Naive thymus-derived CD4-positive, alpha-beta T cell (primary cell): ENCODE measurements at regions of chr21 and their contacts with region 1.

Region 1: GRCh38 chr21:29298348-29299045 is at the start of gene BACH1:
- DNase-seq: peak; percentile 59 to 91 (median 76)
- ATAC-seq: peak; percentile 80
- H3K4me3 ChIP-seq: peak within 1 kb of the TSS; percentile 71
- H3K4me3 Mint-ChIP-seq: peak within 1 kb of the TSS; percentile 84 to 94 (median 90)
- H3K27ac ChIP-seq: peak within 1 kb of the TSS; percentile 86
- H3K27ac Mint-ChIP-seq: peak within 1 kb of the TSS; percentile 71 to 91 (median 78)
- H3K4me1 ChIP-seq: peaks cover 4 to 47% of the 10 kb centered on the region in 2 donors
- H3K4me1 Mint-ChIP-seq: peaks cover 42 to 85% (median 74%) of the 10 kb centered on the region in 7 donors
- H3K27me3 ChIP-seq: no peaks in the 10 kb centered on the region
- H3K27me3 Mint-ChIP-seq: peaks cover 0 to 3% (median 0%) of the 10 kb centered on the region in 5 donors
- total RNA-seq, gene BACH1: 26.0 to 95.6 (median 45.5) TPM

Region 2: DNA sequence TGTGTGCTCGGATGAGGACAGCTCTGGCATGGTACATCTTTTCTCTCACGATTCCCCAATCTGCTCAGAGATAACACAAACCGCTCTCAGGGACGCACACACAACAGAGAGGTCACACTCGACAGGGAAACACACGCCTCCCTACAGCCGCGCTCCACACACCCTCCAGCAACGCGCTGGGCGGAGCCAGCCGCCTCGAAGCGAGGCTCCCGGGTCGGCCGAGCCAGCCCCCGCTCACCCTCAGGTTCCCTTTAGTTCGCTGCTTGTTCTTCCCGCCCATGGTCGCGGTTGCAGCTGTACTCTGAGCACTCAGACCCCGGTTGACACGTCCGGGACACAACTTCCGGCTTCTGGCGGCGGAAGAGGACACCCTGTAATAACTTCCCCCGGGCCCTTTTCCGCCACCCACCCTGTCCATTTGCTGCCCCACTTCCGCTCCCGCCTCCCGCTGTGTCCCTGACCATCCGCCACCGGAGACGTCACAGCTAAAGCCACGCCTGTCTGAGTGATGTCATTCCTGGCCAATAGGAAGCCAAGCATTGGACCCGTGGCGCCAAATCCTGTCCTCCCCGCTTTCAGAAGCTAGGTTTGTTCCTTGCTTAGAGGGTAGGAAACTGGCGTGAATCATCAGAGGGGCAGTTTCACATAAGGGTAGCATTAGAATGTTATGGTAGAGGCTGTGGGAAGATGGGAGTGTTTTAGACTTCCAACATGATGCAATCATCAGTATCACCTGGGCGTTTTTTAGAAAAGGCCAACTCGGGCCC is 305.8 kb before region 1 on chr21 and contains the start of gene LTN1:
- CTCF ChIA-PET with region 1: no interaction called
- POLR2A ChIA-PET with region 1: no interaction called
- intact Hi-C with region 1: loop called (anchors 2 to 10 kb)
- DNase-seq: peak; percentile 91 to 99 (median 98)
- ATAC-seq: peak; percentile 98
- H3K4me3 ChIP-seq: peak within 1 kb of the TSS; percentile 86
- H3K4me3 Mint-ChIP-seq: peak within 1 kb of the TSS; percentile 89 to 99 (median 94)
- H3K27ac ChIP-seq: peak within 1 kb of the TSS; percentile 87
- H3K27ac Mint-ChIP-seq: peak within 1 kb of the TSS; percentile 94 to 99 (median 98)
- H3K4me1 ChIP-seq: peaks cover 11 to 23% of the 10 kb centered on the region in 2 donors
- H3K4me1 Mint-ChIP-seq: peaks cover 26 to 58% (median 42%) of the 10 kb centered on the region in 7 donors
- H3K27me3 ChIP-seq: no peaks in the 10 kb centered on the region
- H3K27me3 Mint-ChIP-seq: no peaks in the 10 kb centered on the region
- total RNA-seq, gene LTN1: 27.3 to 36.3 (median 31.3) TPM

Region 3: DNA sequence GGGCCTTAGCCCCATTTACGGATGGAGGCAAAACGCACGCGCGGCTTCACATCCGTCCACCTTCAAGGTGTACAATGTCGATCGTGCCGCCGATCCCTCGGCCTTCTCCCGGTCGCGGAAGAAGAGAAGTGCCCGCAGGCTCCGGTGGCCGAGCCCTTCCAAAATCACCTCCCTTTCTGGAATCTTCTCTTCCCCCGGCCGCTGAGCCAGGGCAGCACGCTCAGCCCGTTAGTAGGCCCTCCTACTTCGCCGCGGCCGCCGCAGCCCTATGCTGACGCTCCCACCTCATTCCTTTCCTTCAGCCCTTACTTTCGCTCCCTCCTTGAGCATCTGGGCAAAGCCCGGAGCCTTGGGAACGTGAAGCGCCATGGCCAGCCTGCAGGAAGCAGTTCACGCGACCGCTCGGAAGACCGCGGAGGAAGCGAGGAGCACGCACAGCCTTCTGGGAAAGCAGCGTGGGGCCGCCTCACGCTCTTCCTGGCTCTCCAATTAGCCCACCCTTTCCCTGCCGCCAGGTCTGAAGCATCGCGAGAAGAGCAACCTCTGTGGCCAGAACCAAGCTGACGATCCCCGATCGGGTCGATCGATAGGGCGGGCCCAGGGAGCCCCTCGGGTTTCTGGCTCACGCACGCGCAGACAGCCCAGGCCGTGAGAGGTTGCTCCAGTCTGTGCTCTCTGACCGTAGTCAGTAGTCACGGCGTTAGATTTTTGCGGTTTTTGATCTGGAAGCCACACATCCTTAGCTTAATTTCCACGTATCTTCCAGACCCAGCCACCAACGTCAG is 225.1 kb before region 1 on chr21 and contains the start of gene CCT8:
- CTCF ChIA-PET with region 1: no interaction called
- POLR2A ChIA-PET with region 1: interaction called, 54 read pairs
- intact Hi-C with region 1: loop called (anchors 1 kb)
- DNase-seq: peak; percentile 93 to 100 (median 98)
- ATAC-seq: peak; percentile 96
- H3K4me3 ChIP-seq: peak within 1 kb of the TSS; percentile 80
- H3K4me3 Mint-ChIP-seq: peak within 1 kb of the TSS; percentile 98 to 100 (median 99)
- H3K27ac ChIP-seq: peak within 1 kb of the TSS; percentile 88
- H3K27ac Mint-ChIP-seq: peak within 1 kb of the TSS; percentile 97 to 100 (median 99)
- H3K4me1 ChIP-seq: peaks cover 24 to 25% of the 10 kb centered on the region in 2 donors
- H3K4me1 Mint-ChIP-seq: peaks cover 19 to 78% (median 67%) of the 10 kb centered on the region in 7 donors
- H3K27me3 ChIP-seq: no peaks in the 10 kb centered on the region
- H3K27me3 Mint-ChIP-seq: no peaks in the 10 kb centered on the region
- total RNA-seq, gene CCT8: 87.6 to 223 (median 126) TPM

Region 4: DNA sequence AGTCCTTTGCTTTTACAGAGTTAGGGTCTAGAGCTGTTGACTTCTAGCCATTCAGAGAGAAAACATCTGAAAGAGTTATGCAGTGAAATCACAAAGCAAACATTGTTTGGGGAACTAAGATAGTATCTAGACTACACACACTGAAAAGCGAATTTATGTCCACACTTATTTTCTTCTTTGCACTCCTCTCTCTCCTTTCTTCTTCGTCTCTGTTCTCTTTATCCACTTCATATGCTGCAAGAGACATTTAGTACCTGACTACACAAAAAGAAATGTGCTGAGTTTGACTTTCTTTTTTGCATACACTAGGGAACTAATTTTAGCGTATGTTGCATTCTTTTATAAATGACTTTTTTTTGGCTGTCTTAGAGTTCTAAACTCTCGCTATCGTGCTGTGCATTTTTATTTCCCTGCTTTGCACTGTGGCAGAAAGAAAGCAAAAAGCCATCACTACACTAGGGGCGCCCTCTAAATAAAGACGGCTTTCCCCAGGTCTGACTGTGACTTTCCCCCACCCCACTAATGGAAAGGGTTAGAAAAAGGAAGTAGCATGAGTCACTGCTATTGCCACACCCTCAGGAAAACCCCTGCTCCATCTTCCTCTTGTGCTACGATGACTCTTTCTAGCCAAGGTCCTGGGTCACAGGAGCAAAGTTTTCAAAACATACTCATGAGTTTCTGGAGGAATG is 102.4 kb before region 1 on chr21:
- CTCF ChIA-PET with region 1: interaction called, 3 read pairs
- POLR2A ChIA-PET with region 1: no interaction called
- intact Hi-C with region 1: loop called (anchors 1 kb)
- DNase-seq: peak in 8 of 9 donors; percentile 13 to 71 (median 44)
- ATAC-seq: peak; percentile 99
- H3K4me3 ChIP-seq: peak overlapping the region; percentile 30
- H3K4me3 Mint-ChIP-seq: peak overlapping the region; percentile 63 to 92 (median 82)
- H3K27ac ChIP-seq: no peak overlapping the region
- H3K27ac Mint-ChIP-seq: peak overlapping the region; percentile 2 to 88 (median 84)
- H3K4me1 ChIP-seq: peaks cover 0 to 2% of the 10 kb centered on the region in 2 donors
- H3K4me1 Mint-ChIP-seq: peaks cover 12 to 40% (median 24%) of the 10 kb centered on the region in 7 donors
- H3K27me3 ChIP-seq: no peaks in the 10 kb centered on the region
- H3K27me3 Mint-ChIP-seq: no peaks in the 10 kb centered on the region

Region 5: DNA sequence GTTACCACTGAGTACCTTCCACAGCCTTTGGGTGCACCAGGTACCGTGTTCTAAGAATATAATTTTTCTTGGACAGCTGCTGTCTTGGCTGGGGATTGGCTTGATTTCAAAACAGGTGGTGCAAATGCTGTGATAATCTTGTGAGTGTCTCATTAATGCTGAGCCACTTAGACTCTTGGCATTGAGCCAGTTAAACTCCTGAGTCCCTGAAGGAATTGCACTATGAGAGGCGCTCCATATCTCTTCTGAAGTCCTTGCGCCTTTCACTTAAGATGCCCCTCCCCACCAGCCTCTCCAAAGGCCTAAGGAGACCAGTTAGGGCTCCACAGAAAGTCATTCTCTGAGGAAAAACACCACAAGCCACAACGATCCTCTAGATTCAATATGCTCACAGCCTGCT is 51.2 kb after region 1 on chr21:
- CTCF ChIA-PET with region 1: interaction called, 4 read pairs
- POLR2A ChIA-PET with region 1: no interaction called
- intact Hi-C with region 1: loop called (anchors 1 to 2 kb)
- DNase-seq: no peak
- ATAC-seq: no peak
- H3K4me3 ChIP-seq: no peak overlapping the region
- H3K4me3 Mint-ChIP-seq: no peak overlapping the region
- H3K27ac ChIP-seq: no peak overlapping the region
- H3K27ac Mint-ChIP-seq: no peak overlapping the region
- H3K4me1 ChIP-seq: peaks cover 0 to 6% of the 10 kb centered on the region in 2 donors
- H3K4me1 Mint-ChIP-seq: peaks cover 4 to 19% (median 17%) of the 10 kb centered on the region in 7 donors
- H3K27me3 ChIP-seq: no peaks in the 10 kb centered on the region
- H3K27me3 Mint-ChIP-seq: no peaks in the 10 kb centered on the region

Region 6: GRCh38 chr21:29449306-29449950 is 150.9 kb after region 1 on chr21:
- CTCF ChIA-PET with region 1: interaction called, 3 read pairs
- POLR2A ChIA-PET with region 1: no interaction called
- intact Hi-C with region 1: loop called (anchors 1 to 10 kb)
- DNase-seq: peak in 7 of 9 donors; percentile 50 to 90 (median 76)
- ATAC-seq: peak; percentile 93
- H3K4me3 ChIP-seq: peak overlapping the region; percentile 17
- H3K4me3 Mint-ChIP-seq: peak overlapping the region; percentile 1 to 77 (median 64)
- H3K27ac ChIP-seq: peak overlapping the region; percentile 66
- H3K27ac Mint-ChIP-seq: peak overlapping the region; percentile 84 to 98 (median 94)
- H3K4me1 ChIP-seq: peaks cover 7 to 17% of the 10 kb centered on the region in 2 donors
- H3K4me1 Mint-ChIP-seq: peaks cover 5 to 67% (median 24%) of the 10 kb centered on the region in 7 donors
- H3K27me3 ChIP-seq: no peaks in the 10 kb centered on the region
- H3K27me3 Mint-ChIP-seq: no peaks in the 10 kb centered on the region